ENCODE measurements at regions of chr21 and their contacts with region 1.

Region 1: DNA sequence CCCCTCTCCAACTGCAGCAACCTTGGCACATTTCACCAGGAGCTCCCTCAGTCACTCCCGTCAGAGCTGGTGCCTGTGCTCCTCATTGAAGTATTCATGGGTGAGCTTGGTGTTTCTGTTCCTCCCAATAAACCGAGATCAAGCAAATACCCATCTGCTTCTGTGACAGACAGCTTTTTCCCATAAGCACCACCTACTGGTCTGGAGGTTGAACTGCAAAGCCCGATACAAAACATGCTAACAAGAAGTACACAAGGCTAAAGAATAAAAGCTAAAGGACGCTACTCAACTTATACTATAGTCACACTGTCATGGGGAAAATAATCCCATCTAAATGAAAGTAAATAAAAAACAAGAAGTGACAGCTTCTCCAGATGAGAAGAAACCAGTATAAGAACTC is 111.9 kb upstream of the C21orf91 start:
- DNase-seq: peak; percentile 10
- ATAC-seq: no peak
- H3K4me3 ChIP-seq: no peak overlapping the region
- H3K4me3 Mint-ChIP-seq: no peak overlapping the region
- H3K27ac ChIP-seq: no peak overlapping the region
- H3K27ac Mint-ChIP-seq: no peak overlapping the region
- H3K4me1 ChIP-seq: no peaks in the 10 kb centered on the region
- H3K4me1 Mint-ChIP-seq: no peaks in the 10 kb centered on the region
- H3K27me3 ChIP-seq: no peaks in the 10 kb centered on the region
- H3K27me3 Mint-ChIP-seq: no peaks in the 10 kb centered on the region
- CTCF ChIP-seq: peak; percentile 26

Region 2: GRCh38 chr21:17679002-17679600 is 252.0 kb before region 1 on chr21:
- CTCF ChIA-PET with region 1: interaction called, 32 read pairs
- POLR2A ChIA-PET with region 1: no interaction called
- intact Hi-C with region 1: no loop called
- DNase-seq: peak; percentile 71
- ATAC-seq: peak; percentile 78
- H3K4me3 ChIP-seq: no peak overlapping the region
- H3K4me3 Mint-ChIP-seq: no peak overlapping the region
- H3K27ac ChIP-seq: no peak overlapping the region
- H3K27ac Mint-ChIP-seq: no peak overlapping the region
- H3K4me1 ChIP-seq: no peaks in the 10 kb centered on the region
- H3K4me1 Mint-ChIP-seq: no peaks in the 10 kb centered on the region
- H3K27me3 ChIP-seq: no peaks in the 10 kb centered on the region
- H3K27me3 Mint-ChIP-seq: no peaks in the 10 kb centered on the region
- CTCF ChIP-seq: peak; percentile 92

Region 3: GRCh38 chr21:18460979-18461378 is 529.9 kb after region 1 on chr21:
- CTCF ChIA-PET with region 1: no interaction called
- POLR2A ChIA-PET with region 1: no interaction called
- intact Hi-C with region 1: no loop called
- DNase-seq: peak; percentile 76
- ATAC-seq: peak; percentile 93
- H3K4me3 ChIP-seq: peak overlapping the region in 1 of 5 experiments; percentile 4
- H3K4me3 Mint-ChIP-seq: peak overlapping the region; percentile 40
- H3K27ac ChIP-seq: peak overlapping the region; percentile 73 to 80
- H3K27ac Mint-ChIP-seq: peak overlapping the region; percentile 60
- H3K4me1 ChIP-seq: peaks cover 8 to 19% of the 10 kb centered on the region in 2 donors
- H3K4me1 Mint-ChIP-seq: peaks cover 19% of the 10 kb centered on the region
- H3K27me3 ChIP-seq: no peaks in the 10 kb centered on the region
- H3K27me3 Mint-ChIP-seq: no peaks in the 10 kb centered on the region
- CTCF ChIP-seq: no peak

Region 4: GRCh38 chr21:18636897-18637296 is 705.8 kb after region 1 on chr21:
- CTCF ChIA-PET with region 1: no interaction called
- POLR2A ChIA-PET with region 1: no interaction called
- intact Hi-C with region 1: no loop called
- DNase-seq: no peak
- ATAC-seq: no peak
- H3K4me3 ChIP-seq: no peak overlapping the region
- H3K4me3 Mint-ChIP-seq: no peak overlapping the region
- H3K27ac ChIP-seq: no peak overlapping the region
- H3K27ac Mint-ChIP-seq: no peak overlapping the region
- H3K4me1 ChIP-seq: peaks cover 0 to 7% of the 10 kb centered on the region in 2 donors
- H3K4me1 Mint-ChIP-seq: peaks cover 8% of the 10 kb centered on the region
- H3K27me3 ChIP-seq: no peaks in the 10 kb centered on the region
- H3K27me3 Mint-ChIP-seq: no peaks in the 10 kb centered on the region
- CTCF ChIP-seq: no peak